ENCODE measurements at regions of chr15 and their contacts with region 1.

Region 1: DNA sequence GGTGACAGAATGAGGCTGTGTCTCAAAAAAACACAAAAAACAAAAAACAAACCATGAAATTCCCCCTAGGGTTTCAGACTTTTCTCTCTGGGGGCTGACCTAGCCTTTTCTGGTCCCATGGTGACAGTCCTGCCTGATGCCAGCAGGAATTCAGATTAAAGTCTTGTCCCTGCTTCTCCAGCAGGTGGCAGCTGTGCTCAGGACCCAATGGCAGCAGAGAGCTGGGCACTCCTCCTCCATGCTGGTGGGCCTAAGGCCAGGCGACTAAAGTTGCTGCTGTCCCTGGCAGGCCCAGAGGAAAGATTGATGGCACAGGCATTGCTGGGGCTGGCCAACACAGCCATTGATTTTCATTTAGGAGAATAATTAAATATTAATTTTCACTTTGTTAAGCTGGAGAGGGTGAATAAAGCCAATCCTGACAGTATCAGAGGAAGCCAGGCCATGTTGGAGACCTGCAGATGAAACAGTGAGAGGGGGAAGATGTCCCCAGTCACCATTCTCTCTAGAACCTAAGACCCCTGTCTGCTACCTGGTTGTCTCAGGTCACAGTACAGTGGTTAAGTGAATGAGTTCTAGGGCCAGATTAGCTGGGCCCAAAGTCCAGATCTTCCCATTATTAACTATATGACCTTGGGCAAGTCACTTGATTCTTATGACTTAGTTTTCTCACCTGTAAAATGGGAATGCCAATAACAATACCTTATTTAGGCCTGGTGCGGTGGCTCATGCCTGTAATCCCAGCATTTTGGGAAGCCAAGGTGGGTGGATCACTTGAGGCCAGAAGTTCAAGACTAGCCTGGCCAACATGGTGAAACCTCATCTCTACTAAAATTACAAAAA is 7.1 kb downstream of the CELF6 start:
- DNase-seq: peak; percentile 46
- H3K4me3 Mint-ChIP-seq: no peak overlapping the region
- H3K27ac Mint-ChIP-seq: no peak overlapping the region
- H3K4me1 Mint-ChIP-seq: no peaks in the 10 kb centered on the region
- H3K27me3 Mint-ChIP-seq: peaks cover 6% of the 10 kb centered on the region

Region 2: DNA sequence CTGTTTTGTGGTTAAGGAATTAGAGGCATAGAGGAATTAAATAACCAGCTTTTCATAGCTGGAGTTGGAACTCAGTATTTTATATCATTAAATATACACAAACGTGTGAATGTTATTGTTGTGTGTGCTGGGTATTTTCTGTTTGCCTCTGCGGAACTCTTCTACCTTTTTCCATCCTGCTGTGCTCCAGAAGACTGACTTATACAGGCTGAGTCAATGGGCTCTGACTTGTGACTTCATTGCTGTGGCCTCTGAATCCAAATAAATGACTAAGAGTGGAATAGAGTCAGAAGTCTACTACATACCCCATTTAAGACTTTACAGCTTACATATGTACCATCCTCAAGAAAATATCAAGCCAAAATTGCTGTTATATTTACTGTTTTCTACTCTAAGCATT is 178.9 kb after region 1 on chr15:
- intact Hi-C with region 1: no loop called
- DNase-seq: no peak
- H3K4me3 Mint-ChIP-seq: no peak overlapping the region
- H3K27ac Mint-ChIP-seq: no peak overlapping the region
- H3K4me1 Mint-ChIP-seq: peaks cover 41% of the 10 kb centered on the region
- H3K27me3 Mint-ChIP-seq: no peaks in the 10 kb centered on the region

Region 3: GRCh38 chr15:72532991-72533601 is 220.3 kb after region 1 on chr15:
- intact Hi-C with region 1: loop called (anchors 2 kb)
- DNase-seq: no peak
- H3K4me3 Mint-ChIP-seq: no peak overlapping the region
- H3K27ac Mint-ChIP-seq: no peak overlapping the region
- H3K4me1 Mint-ChIP-seq: peaks cover 26% of the 10 kb centered on the region
- H3K27me3 Mint-ChIP-seq: no peaks in the 10 kb centered on the region